Activated naive CD8-positive, alpha-beta T cell treated with anti-CD3 and anti-CD28 coated beads, Interleukin-2, amount 10 ng/mL, durations not matched to agents 7 days and 5 days (primary cell): ENCODE measurements at regions of chr2 and their contacts with region 1.

Region 1: GRCh38 chr2:237674731-237675276 is 47.4 kb downstream of the LRRFIP1 start:
- DNase-seq: peak; percentile 79
- ATAC-seq: peak; percentile 81
- H3K4me3 Mint-ChIP-seq: peak overlapping the region; percentile 90
- H3K27ac Mint-ChIP-seq: peak overlapping the region; percentile 87
- H3K4me1 Mint-ChIP-seq: peaks cover 39% of the 10 kb centered on the region
- H3K27me3 Mint-ChIP-seq: peaks cover 2% of the 10 kb centered on the region

Region 2: GRCh38 chr2:237691908-237692600 is 17.2 kb after region 1 on chr2:
- POLR2A ChIA-PET with region 1: interaction called, 187 read pairs
- DNase-seq: peak; percentile 97
- ATAC-seq: peak; percentile 70
- H3K4me3 Mint-ChIP-seq: peak overlapping the region; percentile 97
- H3K27ac Mint-ChIP-seq: peak overlapping the region; percentile 96
- H3K4me1 Mint-ChIP-seq: peaks cover 59% of the 10 kb centered on the region
- H3K27me3 Mint-ChIP-seq: no peaks in the 10 kb centered on the region

Region 3: GRCh38 chr2:237700512-237701032 is 25.8 kb after region 1 on chr2:
- POLR2A ChIA-PET with region 1: interaction called, 21 read pairs
- DNase-seq: peak; percentile 55
- ATAC-seq: peak; percentile 39
- H3K4me3 Mint-ChIP-seq: peak overlapping the region; percentile 82
- H3K27ac Mint-ChIP-seq: peak overlapping the region; percentile 92
- H3K4me1 Mint-ChIP-seq: peaks cover 83% of the 10 kb centered on the region
- H3K27me3 Mint-ChIP-seq: no peaks in the 10 kb centered on the region